ENCODE measurements at regions of chr2 and their contacts with region 1.

Region 1: GRCh38 chr2:19863303-19864041 is 38.3 kb downstream of the TTC32 start:
- DNase-seq: peak; percentile 71 to 80
- ATAC-seq: peak; percentile 80 to 97 (median 95)
- H3K4me3 ChIP-seq: no peak overlapping the region
- H3K4me3 Mint-ChIP-seq: no peak overlapping the region
- H3K27ac ChIP-seq: no peak overlapping the region
- H3K27ac Mint-ChIP-seq: no peak overlapping the region
- H3K4me1 ChIP-seq: peaks cover 11% of the 10 kb centered on the region
- H3K4me1 Mint-ChIP-seq: peaks cover 6 to 7% of the 10 kb centered on the region in 2 donors
- H3K27me3 ChIP-seq: no peaks in the 10 kb centered on the region
- H3K27me3 Mint-ChIP-seq: no peaks in the 10 kb centered on the region
- CTCF ChIP-seq: peak; percentile 96

Region 2: DNA sequence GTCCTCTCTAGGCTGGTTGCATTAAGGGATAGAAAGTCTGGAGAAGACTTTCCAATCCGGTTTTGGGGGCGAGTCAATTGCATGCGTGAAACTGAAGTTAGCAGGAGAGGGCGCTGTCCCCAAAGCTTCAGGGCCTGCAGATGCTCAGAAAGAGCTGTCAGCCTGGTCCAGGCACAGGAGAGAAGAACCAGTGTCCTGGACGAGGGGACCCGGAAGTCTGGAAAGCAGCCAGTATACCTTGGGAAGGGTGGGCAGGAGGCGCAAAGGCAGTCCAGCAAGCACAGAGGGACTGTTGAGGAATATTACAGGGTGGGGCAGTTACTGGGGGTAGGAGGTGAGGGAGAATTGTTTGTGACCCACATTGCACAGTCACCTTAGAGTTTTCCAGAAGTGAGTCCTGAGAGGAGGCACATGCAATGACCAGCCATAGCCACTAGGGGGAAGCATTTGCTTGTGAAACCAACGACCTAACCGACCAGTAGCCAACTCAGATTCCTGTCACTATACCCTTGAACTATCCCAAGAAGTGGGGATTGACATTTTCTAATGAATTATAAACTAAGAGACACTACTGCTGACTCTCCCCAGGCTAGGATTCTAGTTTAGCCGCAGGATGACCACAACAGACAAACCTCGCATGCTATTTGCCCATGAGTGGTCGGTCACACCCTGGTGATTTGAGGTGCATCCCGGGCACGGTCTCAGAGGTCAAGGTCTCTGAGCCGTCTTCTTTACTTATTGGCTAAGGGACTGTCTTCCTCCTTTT is 1475.8 kb before region 1 on chr2:
- intact Hi-C with region 1: loop called (anchors 1 kb)
- DNase-seq: peak; percentile 44 to 72
- ATAC-seq: peak; percentile 59 to 80 (median 71)
- H3K4me3 ChIP-seq: no peak overlapping the region
- H3K4me3 Mint-ChIP-seq: no peak overlapping the region
- H3K27ac ChIP-seq: no peak overlapping the region
- H3K27ac Mint-ChIP-seq: no peak overlapping the region
- H3K4me1 ChIP-seq: no peaks in the 10 kb centered on the region
- H3K4me1 Mint-ChIP-seq: no peaks in the 10 kb centered on the region
- H3K27me3 ChIP-seq: no peaks in the 10 kb centered on the region
- H3K27me3 Mint-ChIP-seq: no peaks in the 10 kb centered on the region
- CTCF ChIP-seq: peak; percentile 82

Region 3: DNA sequence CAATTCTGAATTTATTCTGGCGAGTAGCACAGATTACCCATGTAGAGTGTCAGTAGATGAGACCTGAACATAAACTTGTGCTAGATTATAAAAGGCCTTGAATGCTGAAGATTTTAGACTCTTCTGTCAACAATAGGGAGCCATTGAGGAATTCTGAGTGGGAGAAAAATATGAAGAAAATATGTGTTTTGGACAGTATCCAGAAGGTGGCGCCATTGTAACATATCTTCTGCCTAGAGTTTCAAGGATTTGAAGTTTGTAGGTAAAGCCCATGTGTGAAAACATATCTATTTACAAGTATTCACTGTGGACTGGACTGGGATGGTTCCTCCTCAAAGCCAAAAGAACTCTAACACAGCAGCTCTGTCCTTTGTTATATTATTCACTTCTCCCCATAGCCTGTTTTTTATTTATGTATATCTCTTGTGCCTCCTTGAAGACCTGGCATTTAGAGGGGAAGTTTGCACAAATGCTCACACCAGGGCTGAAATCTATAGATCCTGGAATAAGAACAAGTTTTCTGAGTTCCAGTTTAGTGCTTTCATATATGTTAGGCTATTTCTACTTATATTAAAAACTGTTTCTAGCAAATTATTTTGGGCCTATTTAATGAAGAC is 1427.9 kb before region 1 on chr2:
- intact Hi-C with region 1: loop called (anchors 5 kb)
- DNase-seq: peak in 1 of 2 donors; percentile 47
- ATAC-seq: no peak
- H3K4me3 ChIP-seq: no peak overlapping the region
- H3K4me3 Mint-ChIP-seq: no peak overlapping the region
- H3K27ac ChIP-seq: no peak overlapping the region
- H3K27ac Mint-ChIP-seq: no peak overlapping the region
- H3K4me1 ChIP-seq: no peaks in the 10 kb centered on the region
- H3K4me1 Mint-ChIP-seq: no peaks in the 10 kb centered on the region
- H3K27me3 ChIP-seq: no peaks in the 10 kb centered on the region
- H3K27me3 Mint-ChIP-seq: peaks cover 0 to 9% of the 10 kb centered on the region in 2 donors
- CTCF ChIP-seq: peak; percentile 27

Region 4: GRCh38 chr2:18520451-18521425 is 1342.7 kb before region 1 on chr2:
- intact Hi-C with region 1: loop called (anchors 1 kb)
- DNase-seq: peak; percentile 67 to 82
- ATAC-seq: peak; percentile 62 to 86 (median 65)
- H3K4me3 ChIP-seq: no peak overlapping the region
- H3K4me3 Mint-ChIP-seq: no peak overlapping the region
- H3K27ac ChIP-seq: no peak overlapping the region
- H3K27ac Mint-ChIP-seq: no peak overlapping the region
- H3K4me1 ChIP-seq: no peaks in the 10 kb centered on the region
- H3K4me1 Mint-ChIP-seq: no peaks in the 10 kb centered on the region
- H3K27me3 ChIP-seq: no peaks in the 10 kb centered on the region
- H3K27me3 Mint-ChIP-seq: peaks cover 6 to 11% of the 10 kb centered on the region in 2 donors
- CTCF ChIP-seq: peak; percentile 90

Region 5: GRCh38 chr2:19589791-19590190 is 273.7 kb before region 1 on chr2:
- intact Hi-C with region 1: no loop called
- DNase-seq: no peak
- ATAC-seq: no peak
- H3K4me3 ChIP-seq: no peak overlapping the region
- H3K4me3 Mint-ChIP-seq: no peak overlapping the region
- H3K27ac ChIP-seq: no peak overlapping the region
- H3K27ac Mint-ChIP-seq: no peak overlapping the region
- H3K4me1 ChIP-seq: no peaks in the 10 kb centered on the region
- H3K4me1 Mint-ChIP-seq: no peaks in the 10 kb centered on the region
- H3K27me3 ChIP-seq: no peaks in the 10 kb centered on the region
- H3K27me3 Mint-ChIP-seq: no peaks in the 10 kb centered on the region
- CTCF ChIP-seq: no peak